Heart right ventricle (tissue), 16 donors: ENCODE measurements at regions of chr6 and their contacts with region 1.

Region 1: GRCh38 chr6:43769526-43770416 is at the start of gene VEGFA:
- DNase-seq: peak; percentile 91 to 93
- ATAC-seq: peak; percentile 70 to 86 (median 80)
- H3K4me3 ChIP-seq: peak within 1 kb of the TSS; percentile 85 to 98 (median 94)
- H3K27ac ChIP-seq: peak within 1 kb of the TSS; percentile 86 to 99 (median 95)
- H3K4me1 ChIP-seq: peaks cover 3 to 45% (median 37%) of the 10 kb centered on the region in 9 donors
- H3K27me3 ChIP-seq: no peaks in the 10 kb centered on the region
- CTCF ChIP-seq: peak; percentile 94 to 99 (median 97)
- total RNA-seq, gene VEGFA: 163 to 456 (median 216) TPM

Region 2: GRCh38 chr6:43174263-43175112 is 595.3 kb before region 1 on chr6:
- intact Hi-C with region 1: no loop called
- DNase-seq: peak; percentile 89 to 98
- ATAC-seq: peak; percentile 67 to 89 (median 83)
- H3K4me3 ChIP-seq: peak overlapping the region in 9 of 10 donors; percentile 37 to 99 (median 97)
- H3K27ac ChIP-seq: peak overlapping the region; percentile 85 to 99 (median 98)
- H3K4me1 ChIP-seq: peaks cover 19 to 51% (median 34%) of the 10 kb centered on the region in 9 donors
- H3K27me3 ChIP-seq: no peaks in the 10 kb centered on the region
- CTCF ChIP-seq: peak in 6 of 9 donors; percentile 16 to 49 (median 30)

Region 3: DNA sequence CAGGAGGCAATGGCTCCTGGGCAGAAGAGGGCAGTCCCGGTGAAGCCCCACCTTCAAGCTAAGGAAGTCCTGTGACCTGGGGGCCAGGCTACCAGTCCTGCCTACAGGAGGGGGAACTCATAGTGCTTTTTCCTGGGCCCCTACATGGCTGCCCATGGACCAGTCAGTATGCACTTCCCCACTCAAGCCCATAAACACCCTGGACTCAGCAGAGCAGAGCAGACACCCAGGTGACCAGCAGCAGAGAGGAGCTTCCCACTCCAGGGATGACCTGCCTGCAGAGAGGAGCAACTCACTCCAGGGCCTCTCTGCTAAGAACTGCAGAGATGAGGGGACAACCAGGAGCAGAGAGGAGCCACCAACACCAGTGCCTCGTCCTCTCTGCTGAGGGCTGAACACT is 356.8 kb before region 1 on chr6:
- intact Hi-C with region 1: no loop called
- DNase-seq: no peak
- ATAC-seq: no peak
- H3K4me3 ChIP-seq: no peak overlapping the region
- H3K27ac ChIP-seq: no peak overlapping the region
- H3K4me1 ChIP-seq: no peaks in the 10 kb centered on the region
- H3K27me3 ChIP-seq: peaks cover 0 to 14% (median 0%) of the 10 kb centered on the region in 7 donors
- CTCF ChIP-seq: no peak

Region 4: DNA sequence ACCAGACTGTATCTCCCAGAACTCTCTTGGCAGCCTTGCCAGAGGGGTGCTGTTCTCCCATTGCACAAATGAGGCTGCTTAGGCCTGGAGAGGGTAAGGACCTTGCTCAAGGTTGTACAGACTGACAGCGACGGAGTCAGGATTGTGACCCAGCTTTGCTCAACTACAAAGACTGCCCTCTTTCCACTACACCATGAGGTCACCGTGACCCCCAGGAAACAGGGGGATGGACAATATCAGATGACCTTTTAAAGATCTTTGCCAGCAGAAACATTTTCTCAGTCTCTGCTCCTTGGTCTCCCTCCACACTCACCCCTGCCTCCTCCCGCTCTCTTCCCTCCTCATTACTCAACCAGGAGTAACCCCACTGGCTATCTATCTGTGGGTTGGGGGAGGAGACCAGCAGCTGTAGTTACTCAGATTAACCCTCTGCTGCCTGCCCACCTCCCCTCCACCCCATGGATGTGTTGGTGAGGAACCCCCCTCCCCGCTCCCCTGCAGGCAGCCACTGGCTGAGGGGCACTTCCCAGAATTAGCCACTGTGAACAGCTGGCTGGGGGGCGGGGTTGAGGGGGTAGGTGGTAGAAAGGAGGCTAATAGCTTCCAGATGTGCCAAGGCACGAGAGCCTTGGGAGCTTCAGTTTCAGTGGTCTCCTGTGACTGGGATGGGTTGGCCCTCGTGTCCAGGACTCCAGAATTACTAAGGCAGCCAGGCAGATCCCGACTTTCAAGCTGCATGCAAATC is 55.3 kb before region 1 on chr6:
- intact Hi-C with region 1: loop called in 1 of 10 experiments (anchors 5 kb)
- DNase-seq: peak in 1 of 2 donors; percentile 37
- ATAC-seq: peak in 2 of 8 donors; percentile 12 to 34
- H3K4me3 ChIP-seq: no peak overlapping the region
- H3K27ac ChIP-seq: peak overlapping the region in 5 of 10 donors; percentile 10 to 54 (median 27)
- H3K4me1 ChIP-seq: peaks cover 4 to 67% (median 41%) of the 10 kb centered on the region in 9 donors
- H3K27me3 ChIP-seq: no peaks in the 10 kb centered on the region
- CTCF ChIP-seq: no peak

Region 5: GRCh38 chr6:43838276-43839036 is 68.7 kb after region 1 on chr6:
- intact Hi-C with region 1: loop called in 3 of 10 experiments (anchors 1 to 5 kb)
- DNase-seq: peak; percentile 18 to 40
- ATAC-seq: peak; percentile 34 to 86 (median 72)
- H3K4me3 ChIP-seq: no peak overlapping the region
- H3K27ac ChIP-seq: peak overlapping the region in 6 of 10 donors; percentile 12 to 67 (median 46)
- H3K4me1 ChIP-seq: peaks cover 0 to 16% (median 10%) of the 10 kb centered on the region in 9 donors
- H3K27me3 ChIP-seq: no peaks in the 10 kb centered on the region
- CTCF ChIP-seq: peak in 8 of 9 donors; percentile 40 to 64 (median 56)

Region 6: GRCh38 chr6:43990627-43991619 is 221.2 kb after region 1 on chr6:
- intact Hi-C with region 1: loop called in 3 of 10 experiments (anchors 5 kb)
- DNase-seq: no peak
- ATAC-seq: peak in 7 of 8 donors; percentile 2 to 33 (median 8)
- H3K4me3 ChIP-seq: no peak overlapping the region
- H3K27ac ChIP-seq: peak overlapping the region; percentile 41 to 94 (median 84)
- H3K4me1 ChIP-seq: peaks cover 12 to 70% (median 24%) of the 10 kb centered on the region in 9 donors
- H3K27me3 ChIP-seq: no peaks in the 10 kb centered on the region
- CTCF ChIP-seq: no peak

Region 7: DNA sequence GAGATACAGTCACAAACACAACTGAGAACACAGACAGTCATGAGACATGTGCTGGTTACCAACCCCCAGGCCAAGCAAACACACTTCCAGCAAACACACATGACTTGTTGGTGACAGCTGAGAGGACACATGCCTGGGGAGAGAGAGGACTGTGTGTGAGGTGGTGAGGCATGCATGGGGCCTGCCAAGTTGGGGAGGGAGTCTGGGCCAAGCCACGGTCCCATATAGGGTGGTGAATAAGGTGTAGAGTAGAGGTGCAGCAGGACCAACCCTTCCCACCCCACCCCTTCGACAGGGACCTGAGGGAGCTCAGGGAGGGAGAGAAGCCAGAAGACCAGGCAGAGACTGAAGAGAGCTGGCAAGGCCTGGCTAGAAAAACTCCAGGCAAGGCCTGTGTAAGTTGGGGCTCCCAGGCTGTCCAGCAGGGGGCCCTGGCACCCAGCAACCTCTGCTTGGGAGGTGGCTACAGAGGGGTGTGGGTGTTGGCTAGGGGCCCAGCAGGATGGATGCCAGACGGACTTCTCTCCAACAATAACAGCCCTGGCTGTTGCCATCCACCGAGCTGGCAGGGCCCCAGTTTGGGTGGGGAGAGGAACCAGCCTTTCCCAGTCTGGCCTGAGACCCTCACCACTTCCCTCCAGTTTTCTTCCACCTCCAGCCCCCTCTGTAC is 451.7 kb after region 1 on chr6:
- intact Hi-C with region 1: loop called in 1 of 10 experiments (anchors 10 kb)
- DNase-seq: peak; percentile 92 to 94
- ATAC-seq: peak; percentile 35 to 80 (median 68)
- H3K4me3 ChIP-seq: peak overlapping the region in 5 of 10 donors; percentile 72 to 87 (median 75)
- H3K27ac ChIP-seq: peak overlapping the region; percentile 82 to 98 (median 94)
- H3K4me1 ChIP-seq: peaks cover 40 to 97% (median 92%) of the 10 kb centered on the region in 9 donors
- H3K27me3 ChIP-seq: no peaks in the 10 kb centered on the region
- CTCF ChIP-seq: peak; percentile 61 to 93 (median 80)